Tibial artery (tissue), 4 donors: ENCODE measurements at regions of chr22 and their contacts with region 1.

Region 1: GRCh38 chr22:49203091-49203858 is 624.4 kb downstream of the BRD1 start:
- DNase-seq: peak; percentile 15 to 43
- H3K4me3 ChIP-seq: no peak overlapping the region
- H3K27ac ChIP-seq: no peak overlapping the region
- H3K4me1 ChIP-seq: no peaks in the 10 kb centered on the region
- H3K27me3 ChIP-seq: peaks cover 0 to 12% of the 10 kb centered on the region in 2 donors
- CTCF ChIP-seq: no peak

Region 2: GRCh38 chr22:48954781-48955311 is 248.4 kb before region 1 on chr22:
- intact Hi-C with region 1: loop called (anchors 5 kb)
- DNase-seq: peak in 1 of 2 donors; percentile 33
- H3K4me3 ChIP-seq: no peak overlapping the region
- H3K27ac ChIP-seq: no peak overlapping the region
- H3K4me1 ChIP-seq: no peaks in the 10 kb centered on the region
- H3K27me3 ChIP-seq: peaks cover 0 to 20% of the 10 kb centered on the region in 2 donors
- CTCF ChIP-seq: no peak